ENCODE measurements at regions of chr10 and their contacts with region 1.

Region 1: GRCh38 chr10:27558612-27559020 is 54.5 kb downstream of the RAB18 start:
- DNase-seq: peak; percentile 55
- ATAC-seq: peak; percentile 91
- H3K4me3 ChIP-seq: no peak overlapping the region
- H3K27ac ChIP-seq: no peak overlapping the region
- H3K4me1 ChIP-seq: no peaks in the 10 kb centered on the region
- H3K27me3 ChIP-seq: no peaks in the 10 kb centered on the region
- CTCF ChIP-seq: peak; percentile 80
- POLR2A ChIP-seq: no peak
- RAD21 ChIP-seq: peak; percentile 83

Region 2: GRCh38 chr10:27661514-27662286 is 103.1 kb after region 1 on chr10:
- CTCF ChIA-PET with region 1: no interaction called
- POLR2A ChIA-PET with region 1: no interaction called
- dilution Hi-C with region 1: no loop called
- in situ Hi-C with region 1: no loop called
- intact Hi-C with region 1: loop called (anchors 2 kb)
- DNase-seq: no peak
- ATAC-seq: no peak
- H3K4me3 ChIP-seq: no peak overlapping the region
- H3K27ac ChIP-seq: no peak overlapping the region
- H3K4me1 ChIP-seq: peaks cover 2% of the 10 kb centered on the region; the same call in 1 of the 2 replicates
- H3K27me3 ChIP-seq: peaks cover 2% of the 10 kb centered on the region; the same call in 1 of the 2 replicates
- CTCF ChIP-seq: no peak
- POLR2A ChIP-seq: no peak
- RAD21 ChIP-seq: no peak

Region 3: DNA sequence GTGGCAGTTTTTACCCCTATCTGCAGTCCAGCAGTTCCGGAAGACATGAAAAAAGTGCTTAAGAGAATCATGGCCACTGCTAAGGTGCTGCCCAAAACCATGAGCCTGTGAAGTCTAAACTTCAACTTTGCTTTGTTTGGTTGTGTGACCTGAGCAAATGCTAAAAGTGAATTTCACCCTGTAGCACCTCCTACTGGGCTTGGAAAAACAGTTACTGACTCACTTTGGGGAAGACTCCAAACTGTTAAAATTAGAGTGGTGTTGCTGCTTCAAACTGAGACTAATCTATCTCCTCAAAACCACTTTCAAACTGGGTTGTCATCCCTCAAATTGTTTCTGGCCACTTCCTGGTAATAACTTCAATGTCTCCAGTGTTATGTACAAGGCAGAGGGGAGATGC is 165.7 kb after region 1 on chr10:
- CTCF ChIA-PET with region 1: interaction called, 4 read pairs
- POLR2A ChIA-PET with region 1: no interaction called
- dilution Hi-C with region 1: no loop called
- in situ Hi-C with region 1: no loop called
- intact Hi-C with region 1: loop called (anchors 5 kb)
- DNase-seq: no peak
- ATAC-seq: no peak; the same call in 1 of the 2 replicates
- H3K4me3 ChIP-seq: no peak overlapping the region
- H3K27ac ChIP-seq: peak overlapping the region; percentile 4; the same call in 1 of the 2 replicates
- H3K4me1 ChIP-seq: peaks cover 11% of the 10 kb centered on the region
- H3K27me3 ChIP-seq: 0 out of 2 replicates have a peak, but pooled peaks cover 1% of the 10 kb centered on the region
- CTCF ChIP-seq: peak; percentile 34
- POLR2A ChIP-seq: no peak
- RAD21 ChIP-seq: peak; percentile 11; the same call in 1 of the 2 replicates

Region 4: DNA sequence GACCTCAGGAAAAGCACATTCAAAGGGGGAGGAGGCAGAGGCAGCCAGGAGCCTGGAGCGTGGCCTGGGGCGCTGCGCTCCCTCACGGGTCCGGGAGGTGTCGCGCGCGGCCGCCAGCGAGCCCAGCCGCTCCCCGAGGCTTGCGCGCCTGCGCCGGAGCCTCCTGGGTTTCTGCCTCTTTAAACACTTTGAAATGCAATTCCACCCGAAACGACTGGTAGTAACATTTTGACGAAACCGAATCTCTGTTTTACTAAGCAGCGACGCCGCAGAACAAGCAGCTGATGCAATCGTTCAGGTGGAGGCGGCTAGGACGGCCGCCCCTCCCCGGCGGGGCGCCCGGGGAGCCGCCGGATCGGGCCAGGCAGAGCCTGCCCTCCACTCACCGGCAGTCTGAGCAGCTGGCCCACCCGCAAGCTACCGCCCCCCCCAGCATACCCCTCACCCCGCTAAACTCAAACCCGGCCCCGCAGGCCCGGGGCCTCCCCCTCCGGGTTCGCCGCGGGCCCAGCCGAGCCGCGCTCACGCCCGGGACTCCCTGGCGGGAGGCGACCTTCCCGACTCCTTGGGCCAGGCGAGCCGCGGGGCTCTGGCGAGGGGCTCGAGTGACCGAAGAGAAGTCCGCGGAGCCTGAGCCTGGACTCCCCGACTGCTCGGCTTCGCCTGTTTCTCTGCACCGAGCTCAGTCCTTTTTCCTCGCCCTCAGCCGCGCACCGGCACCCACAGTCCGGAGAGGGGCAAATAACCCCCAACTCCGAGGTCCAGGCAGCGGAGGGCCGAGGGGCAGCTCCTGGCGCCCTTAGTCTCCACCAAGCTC is 183.8 kb after region 1 on chr10:
- CTCF ChIA-PET with region 1: no interaction called
- POLR2A ChIA-PET with region 1: no interaction called
- dilution Hi-C with region 1: no loop called
- in situ Hi-C with region 1: no loop called
- intact Hi-C with region 1: loop called (anchors 1 kb)
- DNase-seq: peak; percentile 85
- ATAC-seq: peak; percentile 85
- H3K4me3 ChIP-seq: peak overlapping the region; percentile 33
- H3K27ac ChIP-seq: peak overlapping the region; percentile 38
- H3K4me1 ChIP-seq: peaks cover 3% of the 10 kb centered on the region; the same call in 1 of the 2 replicates
- H3K27me3 ChIP-seq: peaks cover 46% of the 10 kb centered on the region
- CTCF ChIP-seq: peak; percentile 89
- POLR2A ChIP-seq: peak; percentile 61
- RAD21 ChIP-seq: peak; percentile 83

Region 5: DNA sequence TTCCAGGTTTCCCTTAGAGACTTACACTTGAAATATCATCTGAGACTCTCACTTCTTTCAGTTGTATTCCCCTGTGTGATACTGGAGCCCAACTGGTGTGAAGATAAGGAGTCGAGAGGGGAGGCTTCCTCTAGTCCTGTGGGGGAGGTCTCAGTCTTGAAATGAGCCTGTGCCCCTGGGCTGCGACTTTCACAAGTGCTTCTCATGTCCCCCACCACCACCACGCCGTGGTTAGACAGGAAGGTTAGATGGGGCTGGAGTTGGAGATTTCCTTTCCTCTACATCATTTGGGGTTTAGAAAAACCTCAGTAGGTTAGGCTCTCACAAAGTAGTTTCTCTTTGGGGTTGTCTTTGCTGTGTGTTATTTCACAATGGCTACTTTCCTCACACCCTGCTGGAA is 212.6 kb after region 1 on chr10:
- CTCF ChIA-PET with region 1: no interaction called
- POLR2A ChIA-PET with region 1: no interaction called
- dilution Hi-C with region 1: no loop called
- in situ Hi-C with region 1: no loop called
- intact Hi-C with region 1: no loop called
- DNase-seq: no peak
- ATAC-seq: no peak
- H3K4me3 ChIP-seq: no peak overlapping the region
- H3K27ac ChIP-seq: no peak overlapping the region
- H3K4me1 ChIP-seq: no peaks in the 10 kb centered on the region
- H3K27me3 ChIP-seq: peaks cover 23% of the 10 kb centered on the region
- CTCF ChIP-seq: no peak
- POLR2A ChIP-seq: no peak
- RAD21 ChIP-seq: no peak

Region 6: DNA sequence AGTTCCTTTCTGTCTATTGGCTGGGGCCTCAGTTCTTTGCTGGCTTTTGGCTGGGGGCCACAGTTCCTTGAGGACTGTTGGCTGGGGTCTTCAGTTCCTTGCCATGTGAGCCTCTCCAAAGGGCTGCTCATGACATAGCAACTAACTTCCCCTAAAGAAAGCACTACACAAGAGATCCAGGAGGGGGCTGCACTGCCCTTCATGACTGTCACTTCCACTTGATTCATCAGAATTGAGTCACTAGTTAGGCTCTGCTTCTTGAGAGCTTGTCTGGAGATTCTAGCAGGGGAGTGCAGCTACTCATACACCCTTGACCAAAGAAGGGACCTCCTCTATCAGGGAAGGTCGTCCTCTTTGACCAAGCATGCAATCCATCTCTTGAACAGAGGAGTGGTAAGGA is 225.0 kb after region 1 on chr10:
- CTCF ChIA-PET with region 1: no interaction called
- POLR2A ChIA-PET with region 1: no interaction called
- dilution Hi-C with region 1: no loop called
- in situ Hi-C with region 1: no loop called
- intact Hi-C with region 1: loop called (anchors 5 kb)
- DNase-seq: peak; percentile 62
- ATAC-seq: peak; percentile 89
- H3K4me3 ChIP-seq: no peak overlapping the region
- H3K27ac ChIP-seq: no peak overlapping the region
- H3K4me1 ChIP-seq: no peaks in the 10 kb centered on the region
- H3K27me3 ChIP-seq: no peaks in the 10 kb centered on the region
- CTCF ChIP-seq: peak; percentile 60
- POLR2A ChIP-seq: no peak
- RAD21 ChIP-seq: peak; percentile 73

Region 7: GRCh38 chr10:28135258-28135657 is 576.6 kb after region 1 on chr10:
- CTCF ChIA-PET with region 1: no interaction called
- POLR2A ChIA-PET with region 1: no interaction called
- dilution Hi-C with region 1: no loop called
- in situ Hi-C with region 1: no loop called
- intact Hi-C with region 1: loop called (anchors 2 kb)
- DNase-seq: peak; percentile 16
- ATAC-seq: peak; percentile 53; the same call in 1 of the 2 replicates
- H3K4me3 ChIP-seq: no peak overlapping the region
- H3K27ac ChIP-seq: no peak overlapping the region
- H3K4me1 ChIP-seq: peaks cover 2% of the 10 kb centered on the region; the same call in 1 of the 2 replicates
- H3K27me3 ChIP-seq: no peaks in the 10 kb centered on the region
- CTCF ChIP-seq: peak; percentile 40
- POLR2A ChIP-seq: no peak
- RAD21 ChIP-seq: peak; percentile 47

Region 8: GRCh38 chr10:28151636-28152035 is 593.0 kb after region 1 on chr10:
- CTCF ChIA-PET with region 1: no interaction called
- POLR2A ChIA-PET with region 1: interaction called, 11 read pairs
- dilution Hi-C with region 1: no loop called
- in situ Hi-C with region 1: no loop called
- intact Hi-C with region 1: no loop called
- DNase-seq: no peak
- ATAC-seq: no peak
- H3K4me3 ChIP-seq: no peak overlapping the region
- H3K27ac ChIP-seq: no peak overlapping the region
- H3K4me1 ChIP-seq: no peaks in the 10 kb centered on the region
- H3K27me3 ChIP-seq: no peaks in the 10 kb centered on the region
- CTCF ChIP-seq: no peak
- POLR2A ChIP-seq: no peak
- RAD21 ChIP-seq: no peak

Measured in IMR-90 (cell line).